Naive thymus-derived CD8-positive, alpha-beta T cell (primary cell): ENCODE measurements at regions of chr19 and their contacts with region 1.

Region 1: GRCh38 chr19:47256688-47257443 is 541 bp downstream of the CCDC9 start:
- DNase-seq: peak; percentile 94 to 99 (median 98)
- ATAC-seq: peak; percentile 74 to 82
- H3K4me3 Mint-ChIP-seq: peak overlapping the region; percentile 89 to 97 (median 93)
- H3K27ac Mint-ChIP-seq: peak overlapping the region; percentile 93 to 99 (median 97)
- H3K4me1 Mint-ChIP-seq: peaks cover 38 to 53% (median 45%) of the 10 kb centered on the region in 4 donors
- H3K27me3 Mint-ChIP-seq: no peaks in the 10 kb centered on the region

Region 2: GRCh38 chr19:47157431-47158321 is 99.2 kb before region 1 on chr19:
- POLR2A ChIA-PET with region 1: interaction called, 16 read pairs
- DNase-seq: peak in 6 of 10 donors; percentile 4 to 52 (median 38)
- ATAC-seq: peak; percentile 21 to 23
- H3K4me3 Mint-ChIP-seq: peak overlapping the region; percentile 61 to 91 (median 82)
- H3K27ac Mint-ChIP-seq: peak overlapping the region; percentile 83 to 98 (median 93)
- H3K4me1 Mint-ChIP-seq: peaks cover 28 to 77% (median 65%) of the 10 kb centered on the region in 4 donors
- H3K27me3 Mint-ChIP-seq: no peaks in the 10 kb centered on the region

Region 3: GRCh38 chr19:47231215-47231984 is 25.5 kb before region 1 on chr19:
- POLR2A ChIA-PET with region 1: interaction called, 24 read pairs
- DNase-seq: peak; percentile 82 to 95 (median 86)
- ATAC-seq: peak; percentile 50 to 63
- H3K4me3 Mint-ChIP-seq: peak overlapping the region; percentile 24 to 87 (median 82)
- H3K27ac Mint-ChIP-seq: peak overlapping the region; percentile 66 to 95 (median 92)
- H3K4me1 Mint-ChIP-seq: peaks cover 17 to 31% (median 23%) of the 10 kb centered on the region in 4 donors
- H3K27me3 Mint-ChIP-seq: no peaks in the 10 kb centered on the region

Region 4: DNA sequence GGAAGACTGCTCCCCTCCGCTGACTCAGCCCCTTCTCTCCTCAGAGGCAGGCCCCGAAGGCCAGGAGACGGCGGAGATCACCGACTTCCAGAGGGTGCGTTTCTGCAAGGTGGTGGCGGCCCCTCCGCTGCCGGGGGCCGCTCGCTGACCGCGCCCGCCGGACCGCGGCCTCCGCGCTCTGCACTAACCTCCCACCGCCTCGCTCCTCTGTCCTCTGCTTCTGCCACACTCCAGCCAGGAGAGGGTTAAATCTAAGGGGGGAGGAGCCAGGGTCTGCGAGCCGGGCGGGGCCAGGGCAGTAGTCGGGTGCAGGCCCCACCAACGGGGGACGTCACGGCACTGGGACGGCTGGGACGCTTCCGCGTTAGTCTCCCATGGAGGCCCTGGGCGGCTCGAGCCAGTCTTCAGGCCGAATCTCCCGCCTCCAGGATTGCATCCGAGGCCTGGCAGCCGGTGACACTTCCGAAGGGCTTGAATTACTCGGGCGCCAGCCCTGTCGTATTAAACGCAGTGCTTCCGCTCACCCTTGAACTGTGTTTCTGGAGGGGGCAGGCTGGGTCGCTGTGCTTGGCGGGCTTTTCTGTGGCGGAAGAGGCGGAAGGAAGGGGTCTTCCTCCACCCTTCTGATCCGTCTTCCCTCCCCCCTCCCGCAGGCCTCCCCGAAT is 16.6 kb after region 1 on chr19:
- POLR2A ChIA-PET with region 1: interaction called, 74 read pairs
- DNase-seq: peak; percentile 80 to 94 (median 87)
- ATAC-seq: peak; percentile 69
- H3K4me3 Mint-ChIP-seq: peak overlapping the region; percentile 86 to 99 (median 97)
- H3K27ac Mint-ChIP-seq: peak overlapping the region; percentile 88 to 99 (median 98)
- H3K4me1 Mint-ChIP-seq: peaks cover 21 to 39% (median 27%) of the 10 kb centered on the region in 4 donors
- H3K27me3 Mint-ChIP-seq: no peaks in the 10 kb centered on the region